GM13977 (cell line): ENCODE measurements at regions of chr14 and their contacts with region 1.

Region 1: GRCh38 chr14:20613094-20614037 is 22.2 kb upstream of the RNASE12 start:
- DNase-seq: peak; percentile 78
- CTCF ChIP-seq: peak; percentile 35

Region 2: GRCh38 chr14:20327005-20327869 is 286.1 kb before region 1 on chr14:
- in situ Hi-C with region 1: loop called (anchors 5 kb)
- DNase-seq: peak; percentile 55
- CTCF ChIP-seq: peak; percentile 63

Region 3: GRCh38 chr14:20684662-20685456 is 71.5 kb after region 1 on chr14:
- in situ Hi-C with region 1: loop called (anchors 5 kb)
- DNase-seq: no peak
- CTCF ChIP-seq: no peak

Region 4: GRCh38 chr14:21317398-21317797 is 704.0 kb after region 1 on chr14:
- in situ Hi-C with region 1: no loop called
- DNase-seq: peak; percentile 34
- CTCF ChIP-seq: no peak